ENCODE measurements at regions of chr15 and their contacts with region 1.

Region 1: DNA sequence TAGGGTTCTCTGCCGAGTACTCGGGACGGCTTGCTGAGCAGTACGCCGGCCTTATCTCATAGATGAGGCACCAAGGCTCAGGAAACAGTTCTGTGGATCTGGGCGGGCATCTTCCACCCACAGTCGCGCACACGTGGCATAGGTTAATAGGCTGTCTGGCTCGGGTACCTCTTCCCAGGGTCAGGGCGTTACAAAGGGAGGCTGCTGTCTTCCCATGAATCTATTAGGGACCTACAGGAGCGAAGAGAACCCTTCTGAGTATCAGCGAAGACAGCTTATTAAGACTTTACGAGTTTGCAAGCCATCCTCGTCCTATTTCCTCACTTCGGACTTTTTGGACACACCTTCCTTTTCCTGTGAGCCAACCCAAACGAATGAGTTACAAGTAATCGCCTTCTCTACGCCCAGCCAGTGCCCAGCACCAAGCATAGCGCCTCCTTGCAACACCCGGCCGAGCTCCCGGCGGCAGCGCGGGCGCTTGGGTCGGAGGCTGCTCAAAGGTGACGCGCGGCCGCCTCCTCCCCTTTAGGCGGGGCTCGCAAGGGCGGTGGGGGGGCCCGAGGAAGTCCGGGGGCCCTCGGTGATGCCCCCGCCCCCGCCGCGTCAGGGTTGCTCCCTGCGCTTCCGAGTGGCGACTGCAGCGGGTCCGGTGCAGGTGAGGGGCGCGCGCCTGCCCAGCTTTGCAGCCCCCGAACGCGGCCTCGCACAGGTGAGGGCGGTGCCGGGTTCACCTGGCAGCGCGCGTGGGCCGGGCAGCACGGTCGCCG is at the start of gene MCTP2:
- DNase-seq: peak; percentile 95
- H3K4me3 Mint-ChIP-seq: peak within 1 kb of the TSS; percentile 77
- H3K27ac Mint-ChIP-seq: peak within 1 kb of the TSS; percentile 93
- H3K4me1 Mint-ChIP-seq: peaks cover 31% of the 10 kb centered on the region
- H3K27me3 Mint-ChIP-seq: no peaks in the 10 kb centered on the region
- CTCF ChIP-seq: no peak
- total RNA-seq, gene MCTP2: 30.1 and 40.5 TPM in 2 replicates

Region 2: GRCh38 chr15:94198633-94199032 is 32.5 kb before region 1 on chr15:
- CTCF ChIA-PET with region 1: interaction called, 3 read pairs
- intact Hi-C with region 1: loop called (anchors 2 kb)
- DNase-seq: no peak
- H3K4me3 Mint-ChIP-seq: no peak overlapping the region
- H3K27ac Mint-ChIP-seq: no peak overlapping the region
- H3K4me1 Mint-ChIP-seq: peaks cover 10% of the 10 kb centered on the region
- H3K27me3 Mint-ChIP-seq: no peaks in the 10 kb centered on the region
- CTCF ChIP-seq: no peak

Region 3: GRCh38 chr15:94324117-94324826 is 93.1 kb after region 1 on chr15:
- CTCF ChIA-PET with region 1: interaction called, 4 read pairs
- intact Hi-C with region 1: loop called (anchors 2 kb)
- DNase-seq: peak; percentile 66
- H3K4me3 Mint-ChIP-seq: no peak overlapping the region
- H3K27ac Mint-ChIP-seq: no peak overlapping the region
- H3K4me1 Mint-ChIP-seq: peaks cover 18% of the 10 kb centered on the region
- H3K27me3 Mint-ChIP-seq: no peaks in the 10 kb centered on the region
- CTCF ChIP-seq: peak; percentile 76

Region 4: GRCh38 chr15:94335616-94336015 is 104.5 kb after region 1 on chr15:
- CTCF ChIA-PET with region 1: no interaction called
- intact Hi-C with region 1: no loop called
- DNase-seq: no peak
- H3K4me3 Mint-ChIP-seq: no peak overlapping the region
- H3K27ac Mint-ChIP-seq: no peak overlapping the region
- H3K4me1 Mint-ChIP-seq: no peaks in the 10 kb centered on the region
- H3K27me3 Mint-ChIP-seq: no peaks in the 10 kb centered on the region
- CTCF ChIP-seq: no peak

Measured in Calu3 (cell line).